Natural killer cell (primary cell): ENCODE measurements at regions of chr22 and their contacts with region 1.

Region 1: DNA sequence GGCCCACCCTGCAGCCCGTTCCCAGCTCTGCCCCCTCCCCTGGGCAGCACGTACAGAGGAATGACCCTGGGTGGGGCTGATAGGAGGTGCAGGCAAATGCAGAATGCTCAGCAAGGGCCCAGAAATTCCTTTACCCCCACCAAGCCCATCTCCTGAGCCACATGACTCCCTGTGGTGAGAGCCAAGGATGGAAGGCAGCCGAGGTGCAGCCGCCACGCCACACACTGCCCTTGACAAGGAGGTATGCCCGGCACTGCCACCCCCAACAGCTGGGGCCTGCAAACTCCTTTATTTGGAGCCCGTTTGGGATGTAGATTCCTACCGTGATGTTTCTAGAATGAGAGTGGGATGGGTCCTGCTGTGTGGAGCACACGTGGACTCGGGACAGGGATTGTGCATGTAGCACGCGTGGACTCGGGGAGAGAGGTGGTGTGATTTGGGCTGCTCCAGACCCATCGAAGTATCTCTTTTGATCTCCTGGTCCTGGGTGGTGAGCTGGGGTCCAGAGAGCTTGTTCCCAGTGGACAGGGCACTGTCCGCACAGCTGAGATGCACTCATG is 12.9 kb downstream of the GTSE1 start:
- DNase-seq: no peak
- ATAC-seq: no peak
- H3K4me3 ChIP-seq: no peak overlapping the region
- H3K4me3 Mint-ChIP-seq: no peak overlapping the region
- H3K27ac ChIP-seq: no peak overlapping the region
- H3K27ac Mint-ChIP-seq: no peak overlapping the region
- H3K4me1 ChIP-seq: peaks cover 2% of the 10 kb centered on the region
- H3K4me1 Mint-ChIP-seq: no peaks in the 10 kb centered on the region
- H3K27me3 ChIP-seq: no peaks in the 10 kb centered on the region
- H3K27me3 Mint-ChIP-seq: no peaks in the 10 kb centered on the region
- CTCF ChIP-seq: no peak

Region 2: GRCh38 chr22:46122511-46122971 is 187.1 kb before region 1 on chr22:
- intact Hi-C with region 1: loop called (anchors 1 kb)
- DNase-seq: peak; percentile 71 to 82
- ATAC-seq: peak in 2 of 3 donors; percentile 84 to 89
- H3K4me3 ChIP-seq: no peak overlapping the region
- H3K4me3 Mint-ChIP-seq: no peak overlapping the region
- H3K27ac ChIP-seq: no peak overlapping the region
- H3K27ac Mint-ChIP-seq: no peak overlapping the region
- H3K4me1 ChIP-seq: peaks cover 12% of the 10 kb centered on the region
- H3K4me1 Mint-ChIP-seq: no peaks in the 10 kb centered on the region
- H3K27me3 ChIP-seq: no peaks in the 10 kb centered on the region
- H3K27me3 Mint-ChIP-seq: no peaks in the 10 kb centered on the region
- CTCF ChIP-seq: peak; percentile 97

Region 3: DNA sequence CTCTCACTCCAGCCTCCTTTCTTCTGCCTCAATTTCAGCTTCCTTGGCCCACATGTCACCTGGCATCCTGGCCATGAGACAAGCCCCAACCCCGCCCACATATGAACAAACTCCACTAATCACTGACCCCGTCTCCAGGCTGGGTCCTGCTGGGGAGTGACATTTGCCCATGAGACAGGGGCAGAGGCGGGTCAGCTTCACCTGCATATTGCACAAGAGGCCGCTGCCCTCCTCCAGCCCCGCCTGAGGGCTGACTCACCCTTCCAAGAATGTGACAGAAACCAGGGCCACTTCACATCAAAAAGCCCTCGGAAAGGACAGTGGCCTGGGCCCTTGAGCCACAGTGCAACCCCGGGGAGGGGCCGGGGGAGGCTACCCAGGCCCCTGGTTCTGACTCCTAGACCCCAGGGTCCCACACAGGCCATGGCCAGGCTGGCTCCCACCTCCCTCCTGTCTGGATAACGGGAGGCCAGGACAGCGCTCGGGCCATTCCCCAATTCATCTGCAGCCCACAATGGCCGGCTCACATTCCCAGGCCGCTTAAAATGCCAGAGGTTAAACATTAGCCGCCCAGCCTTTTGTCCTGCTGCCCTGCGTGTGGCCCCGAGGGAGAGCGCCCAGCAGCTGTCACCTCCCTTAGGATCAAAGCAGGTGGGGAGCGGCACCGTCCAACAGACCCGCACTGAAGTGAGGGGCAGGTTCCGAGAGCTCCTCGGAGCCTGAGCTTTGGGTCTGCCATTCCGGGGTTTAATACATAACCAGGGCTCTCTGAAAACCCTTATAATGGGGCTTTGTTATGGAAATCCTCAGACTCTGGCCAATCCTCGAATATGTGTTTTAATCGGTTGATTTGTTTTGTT is 68.2 kb after region 1 on chr22:
- intact Hi-C with region 1: no loop called
- DNase-seq: no peak
- ATAC-seq: no peak
- H3K4me3 ChIP-seq: no peak overlapping the region
- H3K4me3 Mint-ChIP-seq: no peak overlapping the region
- H3K27ac ChIP-seq: no peak overlapping the region
- H3K27ac Mint-ChIP-seq: no peak overlapping the region
- H3K4me1 ChIP-seq: peaks cover 38% of the 10 kb centered on the region
- H3K4me1 Mint-ChIP-seq: peaks cover 40 to 41% of the 10 kb centered on the region in 2 donors
- H3K27me3 ChIP-seq: no peaks in the 10 kb centered on the region
- H3K27me3 Mint-ChIP-seq: peaks cover 0 to 9% of the 10 kb centered on the region in 2 donors
- CTCF ChIP-seq: no peak